HCT116 (cell line): ENCODE measurements at regions of chr15 and their contacts with region 1.

Region 1: GRCh38 chr15:64836023-64836536 is 5.6 kb upstream of the PLEKHO2 start:
- DNase-seq: no peak
- ATAC-seq: peak; percentile 3
- H3K4me3 ChIP-seq: peak overlapping the region in 1 of 2 experiments; percentile 28; a peak in 1 of 4 replicates
- H3K27ac ChIP-seq: peak overlapping the region; percentile 43
- H3K4me1 ChIP-seq: peaks cover 15 to 25% of the 10 kb centered on the region in 2 experiments
- H3K27me3 ChIP-seq: no peaks in the 10 kb centered on the region
- CTCF ChIP-seq: no peak
- POLR2A ChIP-seq: no peak
- RAD21 ChIP-seq: no peak

Region 2: DNA sequence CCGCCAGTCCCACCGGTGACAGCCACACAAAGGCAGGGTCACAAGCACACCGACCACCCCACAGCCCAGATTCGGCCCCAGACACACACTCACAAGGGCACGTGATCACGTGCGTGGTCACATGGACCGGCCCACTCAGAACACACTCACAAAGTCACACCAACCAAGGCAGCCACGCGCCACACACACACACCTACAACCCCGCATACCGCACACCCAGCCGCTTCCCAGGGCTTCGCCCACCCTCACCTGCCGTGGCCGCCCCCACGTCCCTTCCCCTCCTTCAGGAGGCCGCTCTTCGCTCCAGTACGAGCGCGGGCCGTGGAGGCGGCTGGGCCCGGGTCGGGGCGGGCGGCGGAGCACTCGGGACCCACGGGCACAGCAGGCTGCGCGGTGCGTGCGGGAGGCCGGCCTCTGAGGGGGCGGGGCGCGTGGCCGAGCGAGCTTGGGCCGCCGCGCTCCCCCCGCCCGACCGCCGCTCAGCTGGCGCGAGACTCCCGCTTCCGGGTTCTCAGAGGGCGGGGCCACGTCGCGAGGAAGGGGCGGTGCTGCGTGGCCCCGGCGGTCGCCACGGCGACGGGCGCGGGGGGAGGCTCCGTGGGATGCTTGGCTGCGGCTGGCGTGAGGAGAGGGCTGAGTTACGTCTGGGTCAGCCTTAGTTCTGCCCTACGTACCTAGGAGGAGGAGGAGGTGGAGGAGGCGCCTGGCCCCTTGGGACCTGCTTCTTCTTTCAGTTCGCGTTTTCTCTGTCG is 153.5 kb after region 1 on chr15 and contains the start of gene SPG21:
- CTCF ChIA-PET with region 1: no interaction called
- POLR2A ChIA-PET with region 1: interaction called, 3 read pairs
- RAD21 ChIA-PET with region 1: no interaction called
- intact Hi-C with region 1: loop called (anchors 5 kb)
- DNase-seq: peak; percentile 77
- ATAC-seq: peak; percentile 99
- H3K4me3 ChIP-seq: peak within 1 kb of the TSS; percentile 89 to 94
- H3K27ac ChIP-seq: peak within 1 kb of the TSS; percentile 74
- H3K4me1 ChIP-seq: peaks cover 3 to 14% of the 10 kb centered on the region in 2 experiments; a peak in 3 of 4 replicates
- H3K27me3 ChIP-seq: no peaks in the 10 kb centered on the region
- CTCF ChIP-seq: no peak
- POLR2A ChIP-seq: peak; percentile 82
- RAD21 ChIP-seq: no peak
- total RNA-seq, gene SPG21: 72.7 TPM